ENCODE measurements at regions of chr6 and their contacts with region 1.

Region 1: GRCh38 chr6:130365166-130366106 is at the start of gene TMEM200A:
- DNase-seq: peak; percentile 86
- H3K4me3 Mint-ChIP-seq: peak within 1 kb of the TSS; percentile 77
- H3K27ac Mint-ChIP-seq: peak within 1 kb of the TSS; percentile 27
- H3K4me1 Mint-ChIP-seq: peaks cover 23% of the 10 kb centered on the region
- H3K27me3 Mint-ChIP-seq: peaks cover 47% of the 10 kb centered on the region
- total RNA-seq, gene TMEM200A: 1.3 and 1.6 TPM in 2 replicates

Region 2: GRCh38 chr6:129329678-129330077 is 1035.8 kb before region 1 on chr6:
- intact Hi-C with region 1: no loop called
- DNase-seq: no peak
- H3K4me3 Mint-ChIP-seq: no peak overlapping the region
- H3K27ac Mint-ChIP-seq: no peak overlapping the region
- H3K4me1 Mint-ChIP-seq: no peaks in the 10 kb centered on the region
- H3K27me3 Mint-ChIP-seq: peaks cover 4% of the 10 kb centered on the region

Region 3: DNA sequence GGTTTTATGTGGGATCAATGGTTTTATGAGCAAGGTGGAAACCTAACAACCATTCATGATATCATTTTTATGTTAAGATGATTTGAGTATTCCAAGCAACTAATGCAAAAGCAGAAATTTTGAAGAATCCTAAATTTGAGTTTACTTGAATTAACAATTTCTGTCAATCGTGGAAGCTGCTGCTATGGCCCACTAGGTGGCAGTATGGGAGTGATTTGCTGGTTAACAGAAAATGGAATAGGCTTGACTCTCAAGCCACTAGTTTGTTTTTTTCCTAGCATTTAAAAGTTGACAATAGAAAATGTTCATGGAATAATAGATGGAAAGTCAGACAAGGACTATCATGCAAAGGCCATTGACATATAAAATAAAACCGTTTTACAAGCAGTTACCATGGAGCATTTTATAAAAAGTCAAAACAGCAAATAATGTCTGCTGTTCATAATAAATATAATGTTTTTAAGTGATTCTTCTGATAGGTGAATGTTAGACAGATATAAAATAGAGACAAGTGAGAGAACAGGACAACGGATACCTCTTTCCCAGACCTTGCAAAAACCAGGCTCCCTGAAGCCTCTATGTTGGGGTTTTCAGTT is 42.7 kb before region 1 on chr6:
- intact Hi-C with region 1: loop called (anchors 2 kb)
- DNase-seq: peak; percentile 85
- H3K4me3 Mint-ChIP-seq: no peak overlapping the region
- H3K27ac Mint-ChIP-seq: no peak overlapping the region
- H3K4me1 Mint-ChIP-seq: peaks cover 12% of the 10 kb centered on the region
- H3K27me3 Mint-ChIP-seq: peaks cover 21% of the 10 kb centered on the region

Region 4: GRCh38 chr6:130381459-130382380 is 16.3 kb after region 1 on chr6:
- intact Hi-C with region 1: loop called (anchors 2 kb)
- DNase-seq: peak; percentile 83
- H3K4me3 Mint-ChIP-seq: peak overlapping the region; percentile 20
- H3K27ac Mint-ChIP-seq: peak overlapping the region; percentile 14
- H3K4me1 Mint-ChIP-seq: peaks cover 20% of the 10 kb centered on the region
- H3K27me3 Mint-ChIP-seq: peaks cover 10% of the 10 kb centered on the region

Region 5: DNA sequence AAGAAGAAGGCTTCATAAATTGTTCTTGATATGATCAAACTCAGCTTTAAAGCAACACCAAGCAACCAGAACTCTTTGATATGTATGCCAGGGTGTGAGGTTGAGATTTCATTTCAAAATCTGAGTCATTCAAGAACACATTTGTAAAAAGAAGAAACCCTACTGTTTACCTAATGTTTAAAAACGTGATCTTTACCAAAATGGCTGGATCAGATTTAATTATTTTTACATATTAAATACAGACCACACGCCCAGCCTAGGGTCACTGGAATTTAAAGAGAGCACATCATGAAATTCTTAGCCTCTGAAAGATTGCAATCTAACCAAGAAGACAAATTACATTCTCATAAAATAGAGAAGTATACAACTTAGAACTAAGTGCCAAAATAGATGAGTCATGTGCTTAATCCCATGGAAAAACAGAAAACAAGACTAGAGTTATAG is 254.9 kb after region 1 on chr6:
- intact Hi-C with region 1: loop called (anchors 5 kb)
- DNase-seq: no peak
- H3K4me3 Mint-ChIP-seq: no peak overlapping the region
- H3K27ac Mint-ChIP-seq: no peak overlapping the region
- H3K4me1 Mint-ChIP-seq: peaks cover 15% of the 10 kb centered on the region
- H3K27me3 Mint-ChIP-seq: no peaks in the 10 kb centered on the region